ENCODE measurements at regions of chr18 and their contacts with region 1.

Region 1: DNA sequence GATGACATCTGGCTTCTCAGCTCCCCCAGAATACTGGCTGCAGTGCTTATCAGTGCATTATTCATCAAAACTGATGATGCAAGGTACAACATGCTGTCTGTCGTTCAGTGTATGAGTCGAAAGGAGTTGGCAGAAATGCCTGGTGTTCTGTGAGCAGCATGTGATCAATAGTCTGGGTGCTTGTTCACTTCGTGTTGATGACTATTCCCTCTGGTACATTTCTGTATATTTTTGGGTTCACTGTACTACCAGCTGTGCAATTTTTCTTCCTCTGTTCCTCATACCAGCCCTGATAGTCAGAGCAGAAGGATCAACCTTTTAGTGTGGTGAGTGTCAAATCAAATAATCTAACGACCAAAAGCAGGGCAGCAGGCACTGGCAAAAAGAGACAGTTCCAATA is 59.0 kb upstream of the KLHL14 start:
- DNase-seq: no peak
- H3K4me3 ChIP-seq: no peak overlapping the region
- CTCF ChIP-seq: no peak
- POLR2A ChIP-seq: no peak

Region 2: GRCh38 chr18:32405588-32405987 is 426.2 kb before region 1 on chr18:
- intact Hi-C with region 1: loop called (anchors 5 kb)
- DNase-seq: no peak
- H3K4me3 ChIP-seq: no peak overlapping the region
- CTCF ChIP-seq: no peak
- POLR2A ChIP-seq: no peak

Region 3: DNA sequence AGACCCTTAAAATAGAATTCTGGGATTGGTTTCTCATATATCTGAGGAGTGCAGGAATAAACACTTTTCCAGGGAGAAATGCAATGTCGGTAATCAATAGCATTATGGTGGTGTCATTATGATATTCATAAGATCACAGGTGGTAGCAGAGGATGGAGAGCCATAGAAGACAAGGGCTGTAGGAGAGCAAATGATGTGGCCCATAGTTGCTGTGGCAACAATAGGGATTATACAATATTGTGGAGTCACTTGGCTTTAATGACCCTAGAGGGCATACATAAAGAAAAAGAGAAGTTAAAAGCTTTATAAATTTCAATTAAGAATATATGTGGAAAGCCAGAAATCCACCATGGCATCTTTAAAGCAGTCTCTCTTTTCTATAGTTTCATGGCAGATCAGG is 337.7 kb before region 1 on chr18:
- intact Hi-C with region 1: no loop called
- DNase-seq: no peak
- H3K4me3 ChIP-seq: no peak overlapping the region
- CTCF ChIP-seq: no peak
- POLR2A ChIP-seq: no peak

Region 4: DNA sequence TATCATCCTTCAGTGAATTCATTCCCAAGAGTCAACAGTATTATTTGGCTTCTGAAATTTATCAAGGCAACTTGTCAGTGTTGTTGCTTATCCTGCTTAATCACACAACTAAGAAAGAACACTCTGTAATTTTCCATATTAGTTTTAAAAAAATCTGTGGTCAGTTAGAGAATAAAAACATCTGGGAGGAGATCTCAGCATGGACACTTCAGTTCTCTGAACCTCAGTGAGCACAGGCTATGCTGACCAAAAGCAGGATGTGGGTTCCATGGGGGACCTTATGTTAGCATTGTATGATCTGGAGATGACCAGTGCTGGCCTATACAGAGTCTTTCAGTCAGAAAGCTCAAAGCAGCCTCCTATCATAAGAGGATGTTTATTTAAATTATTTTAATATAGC is 20.2 kb after region 1 on chr18:
- intact Hi-C with region 1: no loop called
- DNase-seq: no peak
- H3K4me3 ChIP-seq: no peak overlapping the region
- CTCF ChIP-seq: no peak
- POLR2A ChIP-seq: no peak